OCI-LY7 (cell line): ENCODE measurements at regions of chr1 and their contacts with region 1.

Region 1: DNA sequence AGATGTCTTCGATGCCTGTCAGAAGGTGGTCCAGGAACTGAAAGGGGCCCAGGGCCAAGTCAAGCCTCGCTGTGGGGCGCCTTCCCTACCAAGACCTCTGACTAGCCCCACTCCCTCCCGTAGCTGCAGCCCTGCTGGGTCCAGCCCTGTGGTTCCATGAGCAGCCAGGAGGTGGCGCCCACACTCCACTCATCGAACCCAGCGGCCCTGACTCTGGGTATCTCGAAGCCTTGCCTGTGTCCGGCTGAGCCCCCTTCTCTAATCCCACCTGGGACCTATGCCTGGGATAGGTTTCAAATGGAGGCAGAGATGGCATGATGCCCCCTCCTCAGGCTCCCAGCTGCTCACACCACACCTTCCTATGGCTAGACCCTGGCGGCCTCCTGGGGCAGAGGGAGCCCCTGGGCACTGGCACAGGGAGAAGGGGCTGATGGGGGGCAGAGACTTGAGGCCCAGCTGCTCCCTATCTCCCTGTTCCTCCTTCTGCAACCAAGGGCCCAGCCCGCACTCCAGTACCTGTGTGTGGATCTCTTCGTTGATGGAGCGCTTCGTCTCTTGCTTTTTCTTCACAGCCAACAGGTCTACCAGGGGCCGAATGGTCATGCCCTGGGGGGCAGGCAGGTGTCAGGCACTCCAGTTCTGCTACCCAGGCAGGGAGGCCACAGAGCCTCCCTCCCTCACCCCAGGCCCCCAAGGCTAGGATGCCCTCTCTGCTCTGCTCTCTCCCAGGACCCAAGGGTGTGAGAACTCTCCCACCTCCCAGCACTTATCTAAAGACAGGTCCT is 52.0 kb downstream of the SLC9A1 start:
- DNase-seq: peak; percentile 70
- H3K4me3 ChIP-seq: no peak overlapping the region
- H3K27ac ChIP-seq: no peak overlapping the region
- H3K4me1 ChIP-seq: peaks cover 24% of the 10 kb centered on the region
- CTCF ChIP-seq: peak; percentile 92

Region 2: DNA sequence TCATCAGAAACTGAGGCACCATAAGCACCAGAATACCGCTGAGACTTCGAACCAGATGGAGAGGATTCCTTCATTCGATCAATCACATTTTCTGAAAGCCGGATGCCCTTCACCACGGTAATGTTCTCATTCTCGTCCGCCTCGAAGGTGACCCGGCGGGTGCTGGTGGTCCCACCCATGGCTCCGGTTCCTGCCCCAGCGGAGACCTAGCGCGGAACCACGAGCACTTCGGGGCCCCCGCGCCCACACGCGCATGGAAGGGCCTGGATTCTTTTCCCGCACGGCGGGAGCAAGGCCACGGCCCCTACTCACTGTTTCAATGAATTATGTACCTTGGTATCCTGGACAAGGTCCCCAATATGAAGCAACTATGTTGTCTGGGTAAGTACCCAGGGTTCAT is 98.4 kb after region 1 on chr1:
- CTCF ChIA-PET with region 1: no interaction called
- POLR2A ChIA-PET with region 1: no interaction called
- intact Hi-C with region 1: loop called (anchors 1 kb)
- DNase-seq: no peak
- H3K4me3 ChIP-seq: no peak overlapping the region
- H3K27ac ChIP-seq: no peak overlapping the region
- H3K4me1 ChIP-seq: no peaks in the 10 kb centered on the region
- CTCF ChIP-seq: no peak